Naive thymus-derived CD4-positive, alpha-beta T cell (primary cell): ENCODE measurements at regions of chr11 and their contacts with region 1.

Region 1: DNA sequence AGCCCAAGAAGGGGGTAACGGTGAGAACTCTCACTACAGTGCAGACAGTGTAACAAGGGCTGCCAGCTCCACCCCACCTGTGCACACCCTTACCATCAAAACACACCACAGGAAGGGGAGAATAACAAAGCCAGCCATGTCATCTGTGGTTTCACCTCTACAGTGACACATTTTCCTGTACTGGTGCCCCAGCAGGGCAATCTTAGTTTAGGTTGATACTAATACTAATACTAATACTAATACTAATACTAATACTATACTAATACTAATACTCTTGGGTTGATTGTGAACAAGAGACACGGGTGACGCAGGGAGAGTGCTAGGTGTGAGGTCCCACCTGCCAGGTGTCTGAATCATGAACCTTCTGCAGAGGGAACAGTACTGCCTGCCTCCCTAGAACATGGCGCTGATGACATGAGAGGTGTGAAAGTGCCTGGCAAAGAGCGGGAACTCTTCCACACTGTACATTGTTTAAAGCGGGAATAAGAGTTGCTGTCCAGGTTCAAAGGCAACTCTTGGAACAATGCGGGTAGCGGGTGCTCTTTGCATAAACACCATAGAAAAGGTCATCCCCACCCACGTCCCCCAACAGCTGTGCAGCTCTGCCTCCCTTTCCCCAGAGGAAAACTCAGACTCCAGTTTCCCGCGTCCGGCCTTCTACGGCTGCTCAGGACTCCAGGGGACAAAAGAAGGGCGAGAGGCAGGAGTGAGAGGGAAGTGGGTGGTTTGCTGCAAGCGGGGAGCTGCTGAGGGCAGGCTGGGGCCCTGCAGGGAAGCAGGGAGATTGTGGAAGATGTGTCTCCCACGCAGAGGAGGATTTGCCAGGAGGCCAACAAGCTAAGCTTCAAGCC is 25.0 kb upstream of the TMPRSS4 start:
- DNase-seq: peak in 8 of 9 donors; percentile 34 to 91 (median 88)
- ATAC-seq: peak; percentile 98
- H3K4me3 ChIP-seq: peak overlapping the region; percentile 29
- H3K4me3 Mint-ChIP-seq: peak overlapping the region; percentile 74 to 94 (median 80)
- H3K27ac ChIP-seq: peak overlapping the region; percentile 65
- H3K27ac Mint-ChIP-seq: peak overlapping the region; percentile 94 to 100 (median 96)
- H3K4me1 ChIP-seq: peaks cover 60 to 65% of the 10 kb centered on the region in 2 donors
- H3K4me1 Mint-ChIP-seq: peaks cover 45 to 64% (median 57%) of the 10 kb centered on the region in 7 donors
- H3K27me3 ChIP-seq: no peaks in the 10 kb centered on the region
- H3K27me3 Mint-ChIP-seq: no peaks in the 10 kb centered on the region

Region 2: DNA sequence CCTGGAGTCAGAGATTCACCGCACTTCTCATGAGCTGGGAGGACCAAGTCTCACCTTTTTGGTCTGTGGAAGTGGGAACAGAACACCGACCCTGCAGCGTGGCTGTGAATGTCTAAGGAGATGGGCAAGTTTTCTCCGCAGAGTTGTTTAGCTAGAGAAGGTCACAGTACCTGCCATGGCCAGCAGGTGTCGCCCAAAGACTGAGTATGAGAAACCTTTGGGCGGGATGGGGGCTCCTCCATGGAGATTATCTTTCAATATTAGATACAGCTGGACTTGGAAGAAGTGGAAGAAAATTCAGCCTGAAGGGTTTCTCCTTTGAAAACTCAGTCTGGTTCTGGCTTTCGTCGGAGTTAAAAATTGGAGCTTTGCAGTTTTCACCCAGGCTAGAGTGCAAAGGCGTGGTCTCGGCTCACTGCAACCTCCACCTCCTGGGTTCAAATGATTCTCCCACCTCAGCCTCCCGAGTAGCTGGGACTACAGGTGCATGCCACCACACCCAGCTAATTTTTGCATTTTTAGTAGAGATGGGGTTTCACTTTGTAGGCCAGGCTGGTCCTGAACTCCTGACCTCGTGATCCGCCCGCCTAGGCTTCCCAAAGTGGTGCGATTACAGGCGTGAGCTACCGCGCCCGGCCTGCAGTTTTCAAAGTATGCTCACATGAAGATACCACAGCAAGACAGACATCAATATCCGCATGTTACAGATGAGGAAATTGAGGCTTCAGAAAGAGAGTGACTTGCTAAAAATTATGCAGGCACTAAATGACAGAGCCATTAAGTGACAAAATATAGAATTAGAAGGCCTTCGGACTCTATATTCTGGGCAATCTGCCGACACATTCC is 244.1 kb before region 1 on chr11:
- CTCF ChIA-PET with region 1: interaction called, 78 read pairs
- POLR2A ChIA-PET with region 1: interaction called, 5 read pairs
- intact Hi-C with region 1: loop called (anchors 1 kb)
- DNase-seq: peak in 8 of 9 donors; percentile 54 to 76 (median 62)
- ATAC-seq: peak; percentile 76
- H3K4me3 ChIP-seq: no peak overlapping the region
- H3K4me3 Mint-ChIP-seq: peak overlapping the region in 1 of 10 donors; percentile 4
- H3K27ac ChIP-seq: no peak overlapping the region
- H3K27ac Mint-ChIP-seq: peak overlapping the region in 2 of 9 donors; percentile 33 to 64
- H3K4me1 ChIP-seq: peaks cover 0 to 4% of the 10 kb centered on the region in 2 donors
- H3K4me1 Mint-ChIP-seq: peaks cover 6 to 19% (median 9%) of the 10 kb centered on the region in 7 donors
- H3K27me3 ChIP-seq: no peaks in the 10 kb centered on the region
- H3K27me3 Mint-ChIP-seq: peaks cover 0 to 3% (median 0%) of the 10 kb centered on the region in 5 donors

Region 3: GRCh38 chr11:117828611-117829368 is 223.0 kb before region 1 on chr11:
- CTCF ChIA-PET with region 1: interaction called, 79 read pairs
- POLR2A ChIA-PET with region 1: interaction called, 4 read pairs
- intact Hi-C with region 1: loop called in 1 of 2 experiments (anchors 1 kb)
- DNase-seq: peak in 6 of 9 donors; percentile 19 to 82 (median 24)
- ATAC-seq: peak; percentile 88
- H3K4me3 ChIP-seq: no peak overlapping the region
- H3K4me3 Mint-ChIP-seq: peak overlapping the region in 7 of 10 donors; percentile 16 to 79 (median 48)
- H3K27ac ChIP-seq: peak overlapping the region; percentile 35
- H3K27ac Mint-ChIP-seq: peak overlapping the region in 6 of 9 donors; percentile 16 to 87 (median 60)
- H3K4me1 ChIP-seq: peaks cover 38 to 47% of the 10 kb centered on the region in 2 donors
- H3K4me1 Mint-ChIP-seq: peaks cover 48 to 72% (median 50%) of the 10 kb centered on the region in 7 donors
- H3K27me3 ChIP-seq: no peaks in the 10 kb centered on the region
- H3K27me3 Mint-ChIP-seq: peaks cover 0 to 2% (median 0%) of the 10 kb centered on the region in 5 donors

Region 4: DNA sequence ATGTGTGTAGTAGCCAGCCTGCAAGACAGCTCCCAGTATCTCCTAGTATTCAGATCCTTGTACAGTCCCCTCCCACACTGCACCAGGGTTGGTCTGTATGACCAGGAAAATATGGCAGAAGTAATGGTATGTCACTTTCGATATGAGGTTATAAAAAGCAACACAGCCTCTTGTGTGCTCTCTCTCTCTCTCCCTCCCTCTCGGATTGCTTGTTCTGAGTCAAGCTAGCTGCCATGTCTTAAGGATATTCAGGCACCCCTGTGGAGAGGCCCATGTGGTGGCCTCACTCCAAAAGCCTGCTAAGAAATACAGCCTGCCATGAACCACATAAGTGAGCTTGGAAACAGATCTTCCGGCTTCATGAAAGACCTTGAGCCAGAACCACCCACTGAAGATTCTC is 200.7 kb before region 1 on chr11:
- CTCF ChIA-PET with region 1: interaction called, 153 read pairs
- POLR2A ChIA-PET with region 1: no interaction called
- intact Hi-C with region 1: no loop called
- DNase-seq: no peak
- ATAC-seq: no peak
- H3K4me3 ChIP-seq: no peak overlapping the region
- H3K4me3 Mint-ChIP-seq: no peak overlapping the region
- H3K27ac ChIP-seq: no peak overlapping the region
- H3K27ac Mint-ChIP-seq: no peak overlapping the region
- H3K4me1 ChIP-seq: no peaks in the 10 kb centered on the region
- H3K4me1 Mint-ChIP-seq: peaks cover 0 to 6% (median 0%) of the 10 kb centered on the region in 7 donors
- H3K27me3 ChIP-seq: no peaks in the 10 kb centered on the region
- H3K27me3 Mint-ChIP-seq: peaks cover 0 to 53% (median 6%) of the 10 kb centered on the region in 5 donors

Region 5: GRCh38 chr11:118002541-118003423 is 49.1 kb before region 1 on chr11:
- CTCF ChIA-PET with region 1: interaction called, 29 read pairs
- POLR2A ChIA-PET with region 1: interaction called, 61 read pairs
- intact Hi-C with region 1: loop called (anchors 1 kb)
- DNase-seq: peak in 1 of 9 donors; percentile 70
- ATAC-seq: peak; percentile 55
- H3K4me3 ChIP-seq: peak overlapping the region; percentile 23
- H3K4me3 Mint-ChIP-seq: peak overlapping the region; percentile 1 to 82 (median 60)
- H3K27ac ChIP-seq: peak overlapping the region; percentile 58
- H3K27ac Mint-ChIP-seq: peak overlapping the region; percentile 51 to 98 (median 87)
- H3K4me1 ChIP-seq: peaks cover 64 to 96% of the 10 kb centered on the region in 2 donors
- H3K4me1 Mint-ChIP-seq: peaks cover 66 to 97% (median 80%) of the 10 kb centered on the region in 7 donors
- H3K27me3 ChIP-seq: no peaks in the 10 kb centered on the region
- H3K27me3 Mint-ChIP-seq: no peaks in the 10 kb centered on the region

Region 6: DNA sequence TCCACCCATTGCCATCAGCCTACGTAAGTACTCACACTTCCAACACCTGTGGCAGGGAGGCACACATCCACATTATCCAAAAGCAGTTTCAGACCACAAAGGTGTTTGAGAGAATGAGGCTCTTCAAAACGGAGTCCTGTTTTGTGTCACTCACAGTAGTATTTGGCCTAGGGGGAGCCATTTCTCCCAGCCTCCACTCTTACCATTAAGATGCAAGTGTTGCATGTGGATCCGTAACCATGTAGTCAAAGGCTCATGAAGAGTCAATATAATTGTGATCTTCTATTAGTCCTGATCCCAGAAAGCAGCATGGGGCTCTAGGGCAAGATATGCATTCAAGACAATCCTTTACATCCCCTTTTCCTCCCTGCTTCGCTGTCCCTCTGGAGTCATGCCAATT is 24.1 kb before region 1 on chr11:
- CTCF ChIA-PET with region 1: interaction called, 5 read pairs
- POLR2A ChIA-PET with region 1: no interaction called
- intact Hi-C with region 1: loop called in 1 of 2 experiments (anchors 1 kb)
- DNase-seq: no peak
- ATAC-seq: no peak
- H3K4me3 ChIP-seq: no peak overlapping the region
- H3K4me3 Mint-ChIP-seq: no peak overlapping the region
- H3K27ac ChIP-seq: no peak overlapping the region
- H3K27ac Mint-ChIP-seq: no peak overlapping the region
- H3K4me1 ChIP-seq: peaks cover 0 to 3% of the 10 kb centered on the region in 2 donors
- H3K4me1 Mint-ChIP-seq: peaks cover 7 to 29% (median 21%) of the 10 kb centered on the region in 7 donors
- H3K27me3 ChIP-seq: no peaks in the 10 kb centered on the region
- H3K27me3 Mint-ChIP-seq: peaks cover 0 to 4% (median 0%) of the 10 kb centered on the region in 5 donors